ENCODE measurements at regions of chr10 and their contacts with region 1.

Region 1: DNA sequence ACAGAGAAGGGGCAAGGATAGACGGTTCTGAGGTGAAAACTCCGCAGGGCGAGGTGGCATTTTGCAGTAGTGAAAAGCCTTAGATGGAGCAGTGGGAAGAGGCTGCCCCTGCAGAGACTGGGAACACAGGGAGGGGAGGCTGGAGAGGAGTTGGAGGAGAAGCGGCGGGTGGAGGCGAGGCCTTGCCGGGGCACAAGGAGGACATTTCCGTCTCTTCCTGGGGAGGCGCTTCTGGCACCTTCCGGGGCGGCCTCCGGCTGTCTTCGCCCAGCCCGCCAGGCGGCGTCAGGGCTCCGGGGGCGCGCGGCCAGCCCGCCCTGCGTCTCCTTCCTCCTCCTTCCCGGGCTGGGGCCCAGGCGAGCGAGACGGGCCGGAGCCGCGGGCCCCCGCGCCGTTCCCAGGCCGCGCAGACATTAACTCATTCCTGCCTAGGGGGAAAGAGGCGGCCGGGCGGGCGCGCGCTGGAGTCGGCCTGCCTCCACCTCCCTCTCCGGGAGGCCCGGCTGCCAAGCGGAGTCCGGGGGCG is 42.7 kb downstream of the LDB3 start:
- DNase-seq: peak; percentile 45
- ATAC-seq: peak; percentile 94
- H3K4me3 ChIP-seq: peak overlapping the region; percentile 92
- H3K27ac ChIP-seq: peak overlapping the region; percentile 73
- H3K4me1 ChIP-seq: peaks cover 4% of the 10 kb centered on the region; the same call in 1 of the 2 replicates
- H3K27me3 ChIP-seq: no peaks in the 10 kb centered on the region
- CTCF ChIP-seq: peak; percentile 73 to 98 (median 90); a peak in 5 of 6 replicates
- EP300 ChIP-seq: no peak
- POLR2A ChIP-seq: peak; percentile 81
- RAD21 ChIP-seq: peak; percentile 77

Region 2: GRCh38 chr10:86798611-86799010 is 87.6 kb after region 1 on chr10:
- CTCF ChIA-PET with region 1: interaction called, 3 read pairs
- POLR2A ChIA-PET with region 1: no interaction called
- RAD21 ChIA-PET with region 1: interaction called, 3 read pairs
- SMC1A ChIA-PET with region 1: interaction called, 3 read pairs
- in situ Hi-C with region 1: no loop called
- intact Hi-C with region 1: loop called (anchors 10 kb)
- DNase-seq: peak; percentile 57
- ATAC-seq: peak; percentile 92
- H3K4me3 ChIP-seq: peak overlapping the region; percentile 12; the same call in 1 of the 2 replicates
- H3K27ac ChIP-seq: peak overlapping the region; percentile 57
- H3K4me1 ChIP-seq: peaks cover 6% of the 10 kb centered on the region; the same call in 1 of the 2 replicates
- H3K27me3 ChIP-seq: no peaks in the 10 kb centered on the region
- CTCF ChIP-seq: no peak
- EP300 ChIP-seq: no peak; a peak in 1 of 4 replicates
- POLR2A ChIP-seq: no peak
- RAD21 ChIP-seq: no peak

Region 3: GRCh38 chr10:86888585-86889381 is 177.7 kb after region 1 on chr10:
- CTCF ChIA-PET with region 1: interaction called, 5 read pairs
- POLR2A ChIA-PET with region 1: interaction called, 9 read pairs
- RAD21 ChIA-PET with region 1: interaction called, 12 read pairs
- SMC1A ChIA-PET with region 1: interaction called, 6 read pairs
- in situ Hi-C with region 1: no loop called
- intact Hi-C with region 1: no loop called
- DNase-seq: peak; percentile 88
- ATAC-seq: peak; percentile 99
- H3K4me3 ChIP-seq: no peak overlapping the region
- H3K27ac ChIP-seq: peak overlapping the region; percentile 45
- H3K4me1 ChIP-seq: peaks cover 6% of the 10 kb centered on the region; the same call in 1 of the 2 replicates
- H3K27me3 ChIP-seq: no peaks in the 10 kb centered on the region
- CTCF ChIP-seq: no peak
- EP300 ChIP-seq: peak; percentile 32 to 81; a peak in 3 of 4 replicates
- POLR2A ChIP-seq: no peak
- RAD21 ChIP-seq: 0 out of 2 replicates have a peak, but pooled peaks have one; percentile 1